ENCODE measurements at regions of chr3 and their contacts with region 1.

Region 1: GRCh38 chr3:138594150-138594934 is at the start of gene CEP70:
- DNase-seq: peak; percentile 93 to 97 (median 95)
- ATAC-seq: peak; percentile 98 to 99 (median 99)
- H3K4me3 ChIP-seq: peak within 1 kb of the TSS; percentile 36 to 87 (median 74)
- H3K27ac ChIP-seq: peak within 1 kb of the TSS; percentile 67 to 93 (median 86)
- H3K4me1 ChIP-seq: peaks cover 0 to 17% (median 9%) of the 10 kb centered on the region in 12 donors
- H3K27me3 ChIP-seq: no peaks in the 10 kb centered on the region
- CTCF ChIP-seq: peak; percentile 75 to 95 (median 88)
- POLR2A ChIP-seq: peak; percentile 87 to 93
- total RNA-seq, gene CEP70: 10.1 to 29.8 (median 23.7) TPM

Region 2: DNA sequence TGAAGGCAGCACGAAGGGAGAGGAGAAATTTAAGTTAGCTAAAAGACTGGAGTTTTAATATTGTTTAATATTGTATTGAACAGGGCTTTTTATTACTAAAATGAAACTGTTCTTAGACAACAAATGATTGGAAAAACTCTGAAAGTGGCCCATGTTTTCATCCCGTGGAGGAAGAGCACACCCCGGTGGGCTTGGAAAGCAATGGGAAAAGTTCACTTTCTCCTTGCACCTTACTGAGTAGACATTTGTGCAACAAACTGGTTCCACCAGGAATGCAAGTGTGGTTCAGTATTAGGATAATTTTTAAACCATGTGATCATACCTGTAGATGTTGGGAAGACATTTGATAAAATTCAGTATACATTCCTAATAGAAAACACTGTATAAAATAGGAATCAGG is 168.1 kb before region 1 on chr3:
- intact Hi-C with region 1: loop called in 1 of 10 experiments (anchors 10 kb)
- DNase-seq: no peak
- ATAC-seq: no peak
- H3K4me3 ChIP-seq: no peak overlapping the region
- H3K27ac ChIP-seq: no peak overlapping the region
- H3K4me1 ChIP-seq: no peaks in the 10 kb centered on the region
- H3K27me3 ChIP-seq: peaks cover 0 to under 1% (median 0%) of the 10 kb centered on the region in 9 donors
- CTCF ChIP-seq: peak; percentile 16 to 62 (median 48)
- POLR2A ChIP-seq: no peak

Region 3: DNA sequence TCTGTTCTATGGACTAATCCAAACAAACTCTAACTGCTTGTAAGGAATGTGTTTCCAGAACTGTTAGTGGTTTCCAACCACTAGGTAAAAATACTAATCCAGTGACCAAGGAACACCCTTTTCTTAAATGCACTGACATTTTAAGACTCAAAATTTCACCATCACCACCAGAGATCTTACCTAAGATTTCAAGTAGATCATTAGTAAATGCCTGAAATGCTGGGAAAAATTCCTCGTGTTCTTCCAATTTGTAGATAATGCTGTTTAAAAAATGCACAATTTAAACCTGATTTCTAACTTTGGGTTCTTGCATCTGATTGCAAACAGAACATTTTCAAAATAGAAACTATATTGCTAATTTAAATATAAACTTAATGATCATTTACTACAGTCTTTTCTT is 96.5 kb before region 1 on chr3:
- intact Hi-C with region 1: no loop called
- DNase-seq: no peak
- ATAC-seq: no peak
- H3K4me3 ChIP-seq: no peak overlapping the region
- H3K27ac ChIP-seq: no peak overlapping the region
- H3K4me1 ChIP-seq: peaks cover 0 to 18% (median 8%) of the 10 kb centered on the region in 12 donors
- H3K27me3 ChIP-seq: no peaks in the 10 kb centered on the region
- CTCF ChIP-seq: no peak
- POLR2A ChIP-seq: no peak

Region 4: GRCh38 chr3:138681463-138682220 is 87.3 kb after region 1 on chr3:
- intact Hi-C with region 1: loop called in 4 of 10 experiments (anchors 5 to 10 kb)
- DNase-seq: no peak
- ATAC-seq: no peak
- H3K4me3 ChIP-seq: no peak overlapping the region
- H3K27ac ChIP-seq: no peak overlapping the region
- H3K4me1 ChIP-seq: no peaks in the 10 kb centered on the region
- H3K27me3 ChIP-seq: no peaks in the 10 kb centered on the region
- CTCF ChIP-seq: no peak
- POLR2A ChIP-seq: no peak

Region 5: GRCh38 chr3:138834359-138835212 is 240.2 kb after region 1 on chr3 and contains the start of gene PIK3CB:
- intact Hi-C with region 1: loop called in 1 of 10 experiments (anchors 10 kb)
- DNase-seq: peak; percentile 91 to 96 (median 93)
- ATAC-seq: peak; percentile 95 to 99 (median 98)
- H3K4me3 ChIP-seq: peak within 1 kb of the TSS; percentile 86 to 100 (median 96)
- H3K27ac ChIP-seq: peak within 1 kb of the TSS; percentile 77 to 99 (median 96)
- H3K4me1 ChIP-seq: peaks cover 0 to 33% (median 10%) of the 10 kb centered on the region in 12 donors
- H3K27me3 ChIP-seq: no peaks in the 10 kb centered on the region
- CTCF ChIP-seq: peak in 11 of 12 donors; percentile 7 to 50 (median 28)
- POLR2A ChIP-seq: peak in 1 of 2 donors; percentile 83
- total RNA-seq, gene PIK3CB: 23.4 to 38.1 (median 29.4) TPM

Region 6: DNA sequence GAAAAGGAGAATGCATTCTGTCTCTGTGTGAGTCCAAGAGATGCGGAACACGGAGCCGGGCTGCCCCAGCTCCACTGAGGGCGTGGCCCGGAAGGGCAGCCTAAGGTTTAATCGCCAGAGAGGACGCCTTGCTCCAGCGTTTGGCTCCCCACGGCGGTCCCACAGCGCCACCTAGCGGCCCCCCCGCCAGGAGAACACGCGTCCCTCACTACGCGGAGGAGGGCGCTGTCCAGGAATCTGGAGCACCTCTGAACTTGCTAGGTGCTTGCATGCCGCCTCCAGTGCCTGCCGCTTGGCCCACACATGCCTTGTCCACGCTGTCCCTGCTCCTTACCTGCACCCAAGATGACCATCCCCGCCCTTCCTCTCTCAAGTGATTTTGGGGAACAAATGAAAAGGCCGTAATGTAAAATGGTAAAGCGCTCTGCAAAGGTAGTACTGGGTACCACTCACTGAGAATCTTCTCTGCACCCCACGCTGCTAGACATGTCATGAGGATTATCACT is 735.1 kb after region 1 on chr3:
- intact Hi-C with region 1: loop called in 1 of 10 experiments (anchors 10 kb)
- DNase-seq: peak; percentile 78 to 93 (median 84)
- ATAC-seq: peak; percentile 86 to 97 (median 96)
- H3K4me3 ChIP-seq: peak overlapping the region in 4 of 12 donors; percentile 18 to 32 (median 29)
- H3K27ac ChIP-seq: no peak overlapping the region
- H3K4me1 ChIP-seq: peaks cover 0 to 8% (median 2%) of the 10 kb centered on the region in 12 donors
- H3K27me3 ChIP-seq: peaks cover 0 to 31% (median 9%) of the 10 kb centered on the region in 9 donors
- CTCF ChIP-seq: peak; percentile 97 to 100 (median 98)
- POLR2A ChIP-seq: no peak

Measured in heart left ventricle (tissue), 16 donors.